Heart right ventricle (tissue), 16 donors: ENCODE measurements at regions of chr1 and their contacts with region 1.

Region 1: DNA sequence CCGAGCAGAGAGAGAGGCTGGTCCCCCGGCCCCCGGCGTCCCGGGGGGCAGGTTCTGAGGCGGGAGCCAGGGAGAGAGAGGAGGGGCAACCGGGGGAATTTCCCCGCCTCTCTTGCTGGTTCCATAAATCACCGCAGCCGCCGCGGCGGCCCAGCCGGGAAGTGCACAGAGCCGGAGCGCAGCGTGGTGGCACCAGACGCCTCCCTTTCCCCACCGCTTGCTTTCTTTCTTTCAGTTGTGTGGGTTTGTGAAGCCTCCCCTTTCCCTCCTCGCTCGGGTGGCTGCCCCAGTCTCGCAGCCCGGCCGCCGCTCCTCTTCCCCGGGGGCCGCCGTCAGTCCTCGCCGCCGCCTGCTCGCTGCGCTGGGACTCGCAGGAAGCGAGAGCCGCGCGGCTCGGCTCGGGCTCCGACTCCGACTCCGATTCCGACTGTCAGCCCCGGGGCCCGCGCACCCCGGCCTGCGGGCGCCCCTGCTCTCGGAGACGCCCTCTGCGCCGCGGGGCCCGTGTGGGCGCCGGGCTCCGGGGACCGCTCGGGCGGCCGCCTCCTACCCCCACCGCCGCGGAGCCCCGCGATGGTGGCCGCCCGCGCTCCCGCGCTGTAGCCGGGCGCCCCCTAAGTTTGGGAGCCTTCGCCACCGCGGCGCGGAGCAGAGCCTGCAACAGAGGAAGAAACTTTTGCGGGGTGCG is at the start of gene CACHD1:
- DNase-seq: peak; percentile 76
- ATAC-seq: peak; percentile 86 to 91 (median 88)
- H3K4me3 ChIP-seq: peak within 1 kb of the TSS; percentile 55 to 83 (median 75)
- H3K27ac ChIP-seq: peak within 1 kb of the TSS; percentile 71 to 90 (median 80)
- H3K4me1 ChIP-seq: peaks cover 0 to 41% (median 18%) of the 10 kb centered on the region in 9 donors
- H3K27me3 ChIP-seq: peaks cover 0 to 52% (median 4%) of the 10 kb centered on the region in 7 donors
- CTCF ChIP-seq: peak; percentile 17 to 71 (median 51)
- total RNA-seq, gene CACHD1: 2.1 to 4.2 (median 2.4) TPM

Region 2: GRCh38 chr1:64268653-64269557 is 201.2 kb before region 1 on chr1:
- intact Hi-C with region 1: loop called in 2 of 10 experiments (anchors 10 kb)
- DNase-seq: peak in 1 of 2 donors; percentile 82
- ATAC-seq: peak; percentile 59 to 81 (median 74)
- H3K4me3 ChIP-seq: no peak overlapping the region
- H3K27ac ChIP-seq: no peak overlapping the region
- H3K4me1 ChIP-seq: peaks cover 0 to 7% (median 0%) of the 10 kb centered on the region in 9 donors
- H3K27me3 ChIP-seq: peaks cover 0 to 11% (median 0%) of the 10 kb centered on the region in 7 donors
- CTCF ChIP-seq: peak; percentile 69 to 91 (median 82)

Region 3: GRCh38 chr1:64539781-64540218 is 69.7 kb after region 1 on chr1:
- intact Hi-C with region 1: loop called in 5 of 10 experiments (anchors 5 to 10 kb)
- DNase-seq: peak; percentile 58 to 85
- ATAC-seq: peak in 6 of 8 donors; percentile 54 to 75 (median 62)
- H3K4me3 ChIP-seq: peak overlapping the region in 8 of 10 donors; percentile 11 to 45 (median 30)
- H3K27ac ChIP-seq: peak overlapping the region in 9 of 10 donors; percentile 35 to 75 (median 67)
- H3K4me1 ChIP-seq: peaks cover 7 to 81% (median 34%) of the 10 kb centered on the region in 9 donors
- H3K27me3 ChIP-seq: no peaks in the 10 kb centered on the region
- CTCF ChIP-seq: no peak

Region 4: DNA sequence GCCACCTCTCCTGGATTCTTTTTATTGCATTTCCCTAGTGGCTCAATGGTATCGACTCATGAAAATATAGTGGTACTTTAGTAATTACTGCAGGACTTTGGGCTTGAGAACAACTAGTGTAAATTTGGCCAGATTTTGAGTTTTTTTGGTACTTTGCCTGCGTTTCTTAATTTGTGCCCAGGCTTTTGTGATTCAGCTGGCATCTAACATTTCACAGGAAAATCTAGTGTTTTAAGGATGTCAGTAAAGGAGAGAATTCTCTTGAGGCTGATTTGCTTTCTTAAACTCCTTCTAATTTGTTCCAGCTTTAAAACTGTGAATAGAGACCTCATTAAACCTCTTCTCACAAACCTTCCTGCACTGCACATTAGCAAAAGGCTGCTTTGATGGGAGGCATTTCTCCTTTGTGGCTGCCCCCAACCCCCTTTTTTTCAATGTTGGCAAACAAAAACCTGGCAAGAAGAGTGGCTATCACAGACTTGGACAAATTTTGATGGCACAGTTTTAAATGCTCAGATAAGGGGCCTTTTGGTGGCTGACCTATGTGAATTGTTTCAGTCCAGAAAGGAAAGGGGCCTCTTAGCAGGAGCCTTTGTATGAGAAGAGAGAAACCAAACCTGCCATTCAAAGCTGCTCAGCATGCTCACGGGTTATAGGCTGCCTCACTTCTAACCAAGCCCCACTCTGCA is 161.4 kb after region 1 on chr1:
- intact Hi-C with region 1: loop called in 1 of 10 experiments (anchors 5 kb)
- DNase-seq: no peak
- ATAC-seq: no peak
- H3K4me3 ChIP-seq: no peak overlapping the region
- H3K27ac ChIP-seq: no peak overlapping the region
- H3K4me1 ChIP-seq: peaks cover 0 to 42% (median 7%) of the 10 kb centered on the region in 9 donors
- H3K27me3 ChIP-seq: no peaks in the 10 kb centered on the region
- CTCF ChIP-seq: no peak

Region 5: DNA sequence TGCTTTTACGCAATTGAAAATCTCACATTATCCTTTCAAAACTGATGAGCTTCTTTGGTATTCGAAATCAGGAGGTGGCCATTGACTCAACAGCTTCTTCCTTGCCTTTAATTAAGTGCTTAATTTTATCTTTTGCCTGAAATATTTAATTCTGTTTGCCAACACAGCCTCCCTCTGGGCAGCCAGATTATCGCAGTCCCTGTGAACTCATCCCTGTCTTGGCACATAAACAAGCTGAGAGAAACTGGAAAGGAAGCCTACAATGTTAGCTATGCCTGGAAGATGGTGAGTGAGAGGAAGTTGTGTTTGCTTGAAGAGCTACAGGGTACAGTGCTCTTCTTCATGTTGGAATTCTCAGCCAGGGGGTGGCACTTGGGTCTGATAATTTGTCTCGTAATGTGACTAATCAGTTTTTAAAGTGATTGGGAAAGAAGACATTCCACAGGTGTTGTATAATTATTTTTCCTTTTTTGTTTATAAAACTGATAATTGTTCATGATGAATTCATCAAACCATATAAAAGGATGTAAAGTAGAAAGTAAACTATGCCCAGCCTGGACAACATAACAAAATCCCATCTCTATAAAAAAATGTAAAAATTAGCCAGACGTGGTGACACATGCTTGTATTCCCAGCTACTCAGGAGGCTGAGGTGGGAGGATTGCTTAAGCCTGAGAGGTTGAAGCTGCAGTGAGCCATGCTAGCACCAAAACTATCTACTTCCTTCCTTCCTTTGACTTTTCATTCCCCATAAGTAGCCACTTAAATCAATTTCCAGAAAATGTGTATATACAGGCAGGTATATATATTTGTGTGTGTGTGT is 184.6 kb after region 1 on chr1:
- intact Hi-C with region 1: loop called in 2 of 10 experiments (anchors 5 to 10 kb)
- DNase-seq: no peak
- ATAC-seq: peak in 4 of 8 donors; percentile 34 to 48 (median 44)
- H3K4me3 ChIP-seq: no peak overlapping the region
- H3K27ac ChIP-seq: no peak overlapping the region
- H3K4me1 ChIP-seq: peaks cover 0 to 11% (median 0%) of the 10 kb centered on the region in 9 donors
- H3K27me3 ChIP-seq: no peaks in the 10 kb centered on the region
- CTCF ChIP-seq: peak in 6 of 9 donors; percentile 7 to 44 (median 27)

Region 6: DNA sequence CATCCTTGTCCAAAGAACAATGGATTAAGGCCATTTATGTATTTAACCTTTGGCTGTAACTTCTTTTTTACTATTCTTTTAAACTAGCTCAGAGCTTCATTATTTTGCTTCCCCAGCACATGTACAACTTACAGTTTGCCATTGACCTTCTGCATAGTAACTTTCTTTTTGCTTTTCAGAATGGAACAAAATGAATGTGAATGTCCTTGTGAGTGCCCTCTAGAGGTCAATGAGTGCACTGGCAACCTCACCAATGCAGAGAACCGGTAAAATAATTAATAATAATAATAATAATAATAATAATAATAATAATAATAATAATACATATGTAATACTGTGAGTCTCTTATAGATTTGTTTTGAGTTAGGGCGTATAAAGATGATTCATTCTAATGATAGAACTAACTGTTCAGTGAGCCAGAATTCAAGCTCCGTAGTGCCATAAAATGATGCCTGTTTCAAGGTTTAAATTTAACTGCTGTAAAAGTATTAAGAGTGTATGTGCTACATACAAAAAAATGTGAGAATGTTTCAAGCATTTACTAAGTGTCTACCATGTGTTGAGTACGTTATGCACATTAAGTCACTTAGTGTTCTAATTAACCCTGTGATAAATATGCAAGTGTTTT is 205.7 kb after region 1 on chr1:
- intact Hi-C with region 1: loop called in 3 of 10 experiments (anchors 5 to 10 kb)
- DNase-seq: no peak
- ATAC-seq: no peak
- H3K4me3 ChIP-seq: no peak overlapping the region
- H3K27ac ChIP-seq: no peak overlapping the region
- H3K4me1 ChIP-seq: peaks cover 0 to 8% (median 0%) of the 10 kb centered on the region in 9 donors
- H3K27me3 ChIP-seq: no peaks in the 10 kb centered on the region
- CTCF ChIP-seq: peak; percentile 49 to 87 (median 73)